Motor neuron (in vitro differentiated cells): ENCODE measurements at regions of chr6 and their contacts with region 1.

Region 1: GRCh38 chr6:89970609-89971337 is 76.5 kb downstream of the GJA10 start:
- ATAC-seq: peak; percentile 50 to 88 (median 80)
- H3K4me3 ChIP-seq: no peak overlapping the region
- H3K27ac ChIP-seq: no peak overlapping the region
- H3K4me1 ChIP-seq: peaks cover 28 to 38% of the 10 kb centered on the region in 2 donors

Region 2: GRCh38 chr6:89458704-89459103 is 512.1 kb before region 1 on chr6:
- in situ Hi-C with region 1: no loop called
- ATAC-seq: peak in 3 of 8 experiments; percentile 36 to 75 (median 71)
- H3K4me3 ChIP-seq: no peak overlapping the region
- H3K27ac ChIP-seq: no peak overlapping the region
- H3K4me1 ChIP-seq: no peaks in the 10 kb centered on the region

Region 3: GRCh38 chr6:90179190-90180169 is 208.7 kb after region 1 on chr6:
- in situ Hi-C with region 1: loop called in 1 of 9 experiments (anchors 25 kb)
- ATAC-seq: no peak
- H3K4me3 ChIP-seq: no peak overlapping the region
- H3K27ac ChIP-seq: no peak overlapping the region
- H3K4me1 ChIP-seq: peaks cover 6 to 16% of the 10 kb centered on the region in 2 donors

Region 4: DNA sequence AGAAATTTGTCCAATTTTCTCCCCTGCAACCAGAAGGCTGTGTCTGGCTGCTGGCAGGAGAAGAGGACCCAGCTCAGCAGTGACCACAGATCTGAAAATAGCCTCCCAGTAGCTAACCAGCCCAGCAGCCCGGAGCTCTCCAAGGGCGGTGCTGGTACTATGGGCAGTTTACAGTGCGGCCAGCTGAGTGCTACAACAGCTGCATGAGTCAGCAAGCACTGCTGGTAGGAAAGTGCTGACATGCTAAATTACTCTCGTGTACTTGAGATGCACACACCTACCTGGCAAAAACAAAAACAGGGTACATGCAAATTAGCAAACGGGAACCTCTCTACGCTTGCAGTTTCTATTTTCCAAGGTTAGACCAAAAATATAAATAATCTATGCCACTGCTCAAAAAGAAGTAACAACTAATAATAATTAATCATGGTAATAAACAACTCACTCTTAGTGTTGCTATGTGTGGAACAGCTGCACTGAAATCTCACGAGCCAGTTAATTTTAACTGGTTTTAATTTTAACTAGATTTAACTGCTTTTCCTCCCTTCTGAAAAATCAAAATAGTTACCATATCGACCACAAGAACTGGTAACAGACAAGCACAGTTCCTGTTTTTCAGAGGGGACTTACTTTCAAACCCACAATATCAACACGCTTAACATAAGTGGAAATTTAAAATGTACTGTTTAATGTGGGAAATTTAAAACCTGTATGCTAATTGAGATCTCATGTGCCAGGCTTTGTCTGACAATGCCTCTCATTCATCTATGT is 315.0 kb after region 1 on chr6:
- in situ Hi-C with region 1: loop called in 1 of 9 experiments (anchors 10 kb)
- ATAC-seq: peak; percentile 94 to 99 (median 95)
- H3K4me3 ChIP-seq: no peak overlapping the region
- H3K27ac ChIP-seq: no peak overlapping the region
- H3K4me1 ChIP-seq: peaks cover 36 to 48% of the 10 kb centered on the region in 2 donors